Left cardiac atrium (tissue), 4 donors: ENCODE measurements at regions of chr2 and their contacts with region 1.

Region 1: DNA sequence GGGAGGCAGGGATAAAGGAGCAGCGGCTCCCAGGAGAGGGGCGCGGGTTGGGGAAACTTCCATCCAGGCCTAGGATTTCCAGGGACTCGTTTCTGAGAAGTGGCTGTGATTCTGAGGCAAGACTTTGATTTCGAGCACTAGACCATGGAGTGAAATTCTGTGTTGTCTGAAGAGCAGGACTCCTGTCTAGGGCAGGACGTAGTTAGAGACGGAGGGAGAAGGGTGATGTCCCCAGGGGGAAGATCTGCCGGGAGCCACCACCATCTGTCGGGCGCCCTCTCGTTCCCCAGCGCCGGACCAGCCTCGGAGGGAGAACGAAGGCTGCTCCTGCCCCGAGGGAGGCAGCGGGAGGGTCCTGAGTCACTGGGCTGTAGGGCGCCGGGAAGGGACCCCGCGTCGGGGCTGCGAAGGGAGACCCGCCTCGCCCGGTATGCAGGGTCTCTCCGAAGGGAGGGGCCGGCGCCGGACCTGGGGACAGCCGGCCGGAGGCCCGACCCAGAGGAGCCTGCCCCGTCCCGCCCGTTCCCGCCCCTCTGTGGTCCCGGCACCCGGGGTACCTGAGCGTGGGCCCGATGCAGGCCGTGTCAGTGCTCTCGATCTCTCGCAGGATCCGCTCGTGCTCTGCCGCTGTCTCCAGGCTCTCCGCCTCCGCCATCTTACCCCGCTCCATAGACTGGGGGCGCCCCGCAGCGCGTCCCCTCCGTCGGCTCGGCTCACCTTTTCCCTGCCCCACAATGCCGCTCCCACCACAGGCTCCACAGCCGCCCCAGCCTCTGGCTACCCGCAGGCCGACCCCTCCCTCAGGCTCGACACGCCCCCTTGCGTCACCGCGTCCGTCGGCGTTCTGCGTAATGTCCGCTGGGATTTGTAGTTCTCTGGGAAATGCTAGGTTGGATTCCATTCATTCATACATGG is at the start of gene EXOC6B:
- DNase-seq: peak; percentile 95
- ATAC-seq: peak; percentile 95 to 96
- total RNA-seq, gene EXOC6B: 93.7 to 113 TPM

Region 2: DNA sequence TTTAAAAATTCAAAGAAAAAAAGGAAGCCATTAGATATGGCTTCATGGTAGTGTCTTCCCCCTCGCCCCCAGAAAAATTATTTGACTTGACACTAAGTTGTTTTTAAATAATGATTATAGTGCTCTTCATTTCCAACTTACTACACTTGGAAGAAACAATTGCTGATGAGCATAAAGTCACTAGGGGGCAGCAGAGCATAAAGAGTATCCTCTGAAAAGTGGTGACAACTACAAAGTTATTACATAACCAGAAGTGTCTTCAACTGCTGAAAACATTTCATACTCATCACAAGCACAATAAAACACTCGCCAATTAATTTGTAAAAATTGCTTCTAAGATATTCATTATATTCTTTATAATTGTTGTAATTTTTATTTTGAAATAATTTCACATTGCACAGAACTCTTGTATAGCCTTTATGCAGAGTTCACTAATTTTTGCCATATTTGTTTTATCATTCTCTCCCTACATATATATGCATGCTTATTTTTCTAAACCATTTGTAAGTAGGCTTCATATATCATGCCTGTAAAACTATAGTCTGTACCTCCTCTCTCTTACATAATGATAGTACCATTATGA is 54.5 kb before region 1 on chr2:
- intact Hi-C with region 1: loop called in 1 of 2 experiments (anchors 2 kb)
- DNase-seq: no peak
- ATAC-seq: peak; percentile 54 to 59

Region 3: DNA sequence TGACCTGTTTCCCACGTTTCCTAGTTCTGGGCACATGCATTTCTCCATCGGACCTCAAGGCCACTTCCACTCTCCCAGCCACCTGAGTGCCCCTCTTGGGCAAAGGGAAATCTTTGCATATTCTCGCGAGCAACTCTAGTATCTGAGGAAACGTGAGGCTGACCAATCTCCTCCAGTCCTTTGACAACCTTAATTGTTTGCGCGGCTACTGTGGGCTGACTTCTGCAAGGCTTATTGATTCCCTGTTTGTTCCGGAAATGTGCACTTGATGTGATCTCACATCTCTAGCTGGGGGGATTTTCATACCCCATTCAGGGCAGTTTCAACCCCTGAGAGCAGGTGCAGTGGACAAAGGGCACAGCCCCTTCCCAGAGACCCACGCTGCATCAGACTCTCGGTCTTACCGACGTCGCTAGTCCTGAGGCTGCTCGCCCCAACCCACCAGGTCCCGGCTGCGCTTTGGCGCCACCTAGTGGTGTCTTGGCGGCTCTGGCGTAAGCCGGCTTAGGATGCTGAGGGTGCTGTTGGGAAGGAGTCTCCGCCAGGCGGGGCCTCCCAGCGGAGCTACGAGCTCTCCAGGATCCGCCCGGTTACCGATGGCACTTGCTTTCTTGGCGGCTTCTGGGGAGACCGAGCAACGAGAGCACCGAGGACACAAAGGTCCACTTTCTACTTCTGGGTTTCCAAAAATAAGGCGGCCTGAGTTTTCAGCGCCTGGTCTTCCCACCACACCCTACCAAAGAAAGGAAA is 36.9 kb after region 1 on chr2:
- intact Hi-C with region 1: loop called in 1 of 2 experiments (anchors 5 kb)
- DNase-seq: peak; percentile 90
- ATAC-seq: peak; percentile 98 to 99

Region 4: DNA sequence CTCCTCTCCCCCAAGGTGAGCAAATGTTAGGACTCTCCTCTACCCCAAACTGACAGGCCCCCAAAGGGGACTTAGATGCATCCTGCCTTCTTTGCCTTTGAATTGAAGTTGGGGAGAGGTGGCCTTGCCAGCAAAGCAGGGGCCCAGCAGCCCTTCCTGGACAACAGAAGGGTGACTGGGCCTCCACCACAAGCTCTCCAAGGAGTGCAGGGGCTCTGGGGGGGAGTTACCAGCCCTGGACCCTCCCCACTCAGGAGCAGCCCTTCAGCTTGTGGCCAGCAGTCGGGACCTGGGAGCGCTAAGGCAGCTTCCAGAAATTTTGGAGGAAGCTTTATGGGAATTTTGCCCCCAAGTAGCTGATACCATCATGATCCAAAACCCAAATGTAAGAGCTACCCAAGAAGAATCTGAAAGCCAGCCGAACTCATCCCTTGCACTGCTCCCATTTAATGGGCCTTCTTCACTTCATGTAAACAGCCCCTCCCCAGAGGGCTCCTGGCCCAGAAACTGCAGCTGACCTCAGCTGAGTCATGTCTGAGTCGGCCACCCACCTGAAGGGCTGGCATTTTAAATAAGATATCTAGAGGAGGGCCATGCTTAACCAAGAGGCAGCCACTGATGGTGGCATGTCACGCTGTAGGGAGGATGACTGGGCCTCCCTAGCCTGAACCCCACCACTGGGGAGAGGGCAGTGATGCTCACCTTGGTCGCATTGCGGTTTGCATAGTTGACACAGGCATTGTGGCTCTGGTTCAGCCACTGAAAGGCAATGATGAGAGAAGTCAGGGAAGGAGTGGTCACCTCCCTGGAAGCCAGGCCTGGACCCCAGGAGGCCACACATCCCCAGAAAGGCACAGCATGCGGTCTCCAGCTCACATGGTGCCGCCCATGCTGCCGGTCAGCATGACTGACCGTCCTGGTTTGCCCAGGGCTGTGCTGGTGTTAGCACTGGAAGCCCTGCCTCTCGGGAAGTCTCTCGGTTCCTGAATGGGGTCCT is 174.5 kb after region 1 on chr2:
- intact Hi-C with region 1: no loop called
- DNase-seq: no peak
- ATAC-seq: peak in 1 of 2 donors; percentile 33

Region 5: GRCh38 chr2:73359915-73360697 is 534.6 kb after region 1 on chr2:
- intact Hi-C with region 1: no loop called
- DNase-seq: no peak
- ATAC-seq: no peak